Calu3 (cell line): ENCODE measurements at regions of chr3 and their contacts with region 1.

Region 1: DNA sequence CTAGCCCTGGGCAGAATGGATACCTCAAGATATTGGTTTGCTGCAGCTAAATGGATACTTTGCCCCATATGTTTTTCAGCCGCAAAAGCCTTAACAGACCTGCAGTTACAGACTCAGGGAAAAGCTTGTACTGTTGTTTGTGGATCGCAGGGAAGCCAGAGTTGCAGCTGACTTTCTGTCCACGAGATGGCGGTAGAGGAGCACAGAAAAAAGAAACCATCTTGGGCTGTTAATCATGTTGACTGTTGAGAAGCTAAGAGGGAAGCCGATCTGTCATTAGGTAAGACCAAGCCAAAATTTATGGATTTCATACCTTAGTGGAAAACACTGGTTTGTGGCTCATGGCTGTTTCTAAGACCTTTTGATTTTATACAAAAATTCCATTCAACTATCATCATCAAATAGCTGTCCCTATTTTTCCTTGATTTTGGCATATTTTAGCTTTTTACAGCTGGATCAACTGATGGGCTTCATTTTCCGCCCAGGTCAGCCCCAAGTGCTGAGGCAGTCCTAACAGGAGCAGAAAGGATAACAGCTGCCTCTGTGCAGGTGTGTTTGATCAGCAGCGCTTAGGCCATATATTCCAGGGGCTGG is 205.7 kb upstream of the ZPLD1 start:
- DNase-seq: peak; percentile 77
- H3K4me3 Mint-ChIP-seq: no peak overlapping the region
- H3K27ac Mint-ChIP-seq: no peak overlapping the region
- H3K4me1 Mint-ChIP-seq: peaks cover 26% of the 10 kb centered on the region
- H3K27me3 Mint-ChIP-seq: no peaks in the 10 kb centered on the region
- CTCF ChIP-seq: peak; percentile 70

Region 2: DNA sequence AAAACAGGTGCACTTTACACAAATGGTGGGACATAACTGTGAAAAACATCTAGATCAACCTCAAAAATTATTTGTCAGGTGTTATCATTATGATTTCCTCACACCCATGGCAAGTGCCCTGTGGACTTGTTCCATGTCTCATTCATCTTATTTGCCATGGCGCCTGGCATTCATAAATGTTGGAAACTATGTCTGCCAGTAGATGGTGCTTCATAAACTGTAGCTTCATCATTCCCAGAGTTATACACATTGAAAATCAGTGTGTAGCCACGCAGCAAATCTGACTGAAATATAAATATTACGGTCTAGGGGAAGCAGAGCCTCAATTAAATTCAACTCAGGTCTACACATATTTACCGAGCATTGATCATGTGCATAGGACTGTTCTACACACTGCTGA is 999.5 kb before region 1 on chr3:
- CTCF ChIA-PET with region 1: no interaction called
- intact Hi-C with region 1: no loop called
- DNase-seq: no peak
- H3K4me3 Mint-ChIP-seq: no peak overlapping the region
- H3K27ac Mint-ChIP-seq: no peak overlapping the region
- H3K4me1 Mint-ChIP-seq: no peaks in the 10 kb centered on the region
- H3K27me3 Mint-ChIP-seq: no peaks in the 10 kb centered on the region
- CTCF ChIP-seq: no peak

Region 3: GRCh38 chr3:101665851-101666250 is 563.3 kb before region 1 on chr3:
- CTCF ChIA-PET with region 1: no interaction called
- intact Hi-C with region 1: loop called (anchors 2 kb)
- DNase-seq: no peak
- H3K4me3 Mint-ChIP-seq: no peak overlapping the region
- H3K27ac Mint-ChIP-seq: no peak overlapping the region
- H3K4me1 Mint-ChIP-seq: no peaks in the 10 kb centered on the region
- H3K27me3 Mint-ChIP-seq: no peaks in the 10 kb centered on the region
- CTCF ChIP-seq: no peak

Region 4: GRCh38 chr3:101809178-101810021 is 419.8 kb before region 1 on chr3:
- CTCF ChIA-PET with region 1: interaction called, 29 read pairs
- intact Hi-C with region 1: loop called (anchors 1 kb)
- DNase-seq: peak; percentile 34
- H3K4me3 Mint-ChIP-seq: no peak overlapping the region
- H3K27ac Mint-ChIP-seq: no peak overlapping the region
- H3K4me1 Mint-ChIP-seq: no peaks in the 10 kb centered on the region
- H3K27me3 Mint-ChIP-seq: no peaks in the 10 kb centered on the region
- CTCF ChIP-seq: peak; percentile 47

Region 5: DNA sequence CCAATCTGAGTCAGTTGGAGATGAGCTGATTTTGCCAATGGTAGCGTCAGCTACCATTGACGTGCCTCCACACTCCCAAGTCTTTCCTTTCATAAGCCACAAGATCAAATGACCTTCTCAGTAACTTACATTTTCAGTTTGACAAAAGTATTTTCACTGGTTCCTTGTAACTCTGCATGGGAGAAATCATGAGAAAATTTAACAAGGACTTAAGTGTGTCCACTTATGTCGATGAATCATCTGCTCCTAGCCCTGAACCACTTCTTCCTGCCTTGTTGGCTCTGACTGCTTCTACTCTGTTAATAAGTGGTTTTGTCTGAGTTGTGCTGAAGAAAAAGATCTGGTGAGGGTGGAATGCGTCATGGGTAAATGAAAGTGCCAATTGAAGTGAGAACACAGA is 278.6 kb before region 1 on chr3:
- CTCF ChIA-PET with region 1: interaction called, 8 read pairs
- intact Hi-C with region 1: loop called (anchors 2 kb)
- DNase-seq: peak; percentile 59
- H3K4me3 Mint-ChIP-seq: peak overlapping the region; percentile 38
- H3K27ac Mint-ChIP-seq: peak overlapping the region; percentile 93
- H3K4me1 Mint-ChIP-seq: peaks cover 42% of the 10 kb centered on the region
- H3K27me3 Mint-ChIP-seq: no peaks in the 10 kb centered on the region
- CTCF ChIP-seq: no peak

Region 6: DNA sequence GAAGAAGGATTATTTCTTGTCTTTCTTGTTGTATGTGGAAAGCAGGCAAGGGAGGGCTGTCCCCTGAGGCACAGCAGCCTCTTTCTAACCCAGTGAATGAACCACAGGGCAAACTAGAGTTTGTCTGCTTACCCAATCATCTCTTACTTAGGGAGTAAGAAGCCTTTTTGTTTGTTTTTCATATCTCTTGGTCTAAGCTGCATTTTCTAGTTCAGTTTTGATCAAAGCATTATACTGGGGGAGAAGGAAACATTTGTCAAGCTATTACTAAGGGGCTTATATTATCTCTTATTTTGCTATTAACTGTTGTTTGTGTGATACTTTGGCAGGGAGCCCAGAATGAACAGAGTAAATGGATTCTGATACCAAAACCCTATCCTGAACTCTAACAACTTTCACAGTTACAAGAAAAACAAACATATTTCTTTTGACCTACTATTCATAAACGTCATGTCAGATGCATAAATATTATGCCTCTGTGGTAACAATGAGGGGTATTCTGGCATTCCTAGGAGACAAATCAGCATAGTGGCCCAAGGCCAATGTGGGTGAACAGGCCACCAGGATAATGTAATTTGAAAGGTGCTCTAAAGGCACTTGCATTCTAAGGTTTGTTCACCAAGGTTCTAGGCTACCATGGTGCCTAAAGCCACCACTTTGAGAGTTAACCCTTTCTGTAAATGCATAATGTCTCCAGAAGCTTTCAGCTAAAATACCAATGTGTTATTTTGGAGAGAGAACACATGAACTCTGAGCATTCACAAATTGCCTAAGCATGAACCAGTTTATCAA is 65.9 kb before region 1 on chr3:
- CTCF ChIA-PET with region 1: interaction called, 11 read pairs
- intact Hi-C with region 1: loop called (anchors 2 kb)
- DNase-seq: peak; percentile 65
- H3K4me3 Mint-ChIP-seq: peak overlapping the region; percentile 27
- H3K27ac Mint-ChIP-seq: peak overlapping the region; percentile 98
- H3K4me1 Mint-ChIP-seq: peaks cover 30% of the 10 kb centered on the region
- H3K27me3 Mint-ChIP-seq: no peaks in the 10 kb centered on the region
- CTCF ChIP-seq: no peak

Region 7: GRCh38 chr3:102529452-102529851 is 300.3 kb after region 1 on chr3:
- CTCF ChIA-PET with region 1: interaction called, 75 read pairs
- intact Hi-C with region 1: loop called (anchors 2 kb)
- DNase-seq: peak; percentile 28
- H3K4me3 Mint-ChIP-seq: no peak overlapping the region
- H3K27ac Mint-ChIP-seq: no peak overlapping the region
- H3K4me1 Mint-ChIP-seq: no peaks in the 10 kb centered on the region
- H3K27me3 Mint-ChIP-seq: no peaks in the 10 kb centered on the region
- CTCF ChIP-seq: peak; percentile 41

Region 8: DNA sequence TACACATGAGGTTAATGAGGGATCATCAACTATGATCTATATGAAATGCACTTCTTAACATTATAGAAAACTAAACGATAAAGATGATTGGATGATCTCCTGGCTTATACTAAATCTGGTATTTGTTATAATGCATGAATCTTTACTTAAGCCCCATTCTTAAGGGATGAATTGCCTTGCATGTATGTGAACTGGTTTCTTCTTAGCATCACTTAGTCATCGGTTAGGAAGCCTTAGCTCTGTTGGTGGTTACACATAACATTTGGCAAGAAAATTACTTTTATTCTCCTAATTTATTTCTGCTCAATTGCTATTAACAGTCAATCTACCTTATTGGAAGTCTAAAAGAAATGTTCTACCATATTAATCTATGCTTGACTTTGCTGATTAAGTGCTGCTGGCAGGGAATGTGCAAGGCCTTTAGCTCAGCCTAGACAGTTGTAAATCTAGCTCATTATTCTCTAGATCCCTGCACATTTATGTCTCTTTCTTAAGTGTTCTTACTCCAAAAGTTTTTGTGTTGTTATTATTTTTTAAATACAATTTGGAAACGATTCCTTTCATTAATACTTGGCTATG is 561.7 kb after region 1 on chr3:
- CTCF ChIA-PET with region 1: no interaction called
- intact Hi-C with region 1: no loop called
- DNase-seq: no peak
- H3K4me3 Mint-ChIP-seq: no peak overlapping the region
- H3K27ac Mint-ChIP-seq: no peak overlapping the region
- H3K4me1 Mint-ChIP-seq: no peaks in the 10 kb centered on the region
- H3K27me3 Mint-ChIP-seq: no peaks in the 10 kb centered on the region
- CTCF ChIP-seq: no peak